Prostate gland (tissue), 2 donors: ENCODE measurements at regions of chr2 and their contacts with region 1.

Region 1: GRCh38 chr2:164717000-164717803 is 95.9 kb upstream of the GRB14 start:
- DNase-seq: no peak
- H3K4me3 ChIP-seq: no peak overlapping the region
- H3K27ac ChIP-seq: no peak overlapping the region
- H3K4me1 ChIP-seq: no peaks in the 10 kb centered on the region
- H3K27me3 ChIP-seq: no peaks in the 10 kb centered on the region
- CTCF ChIP-seq: peak in 2 of 4 experiments; percentile 37 to 40
- POLR2A ChIP-seq: no peak

Region 2: DNA sequence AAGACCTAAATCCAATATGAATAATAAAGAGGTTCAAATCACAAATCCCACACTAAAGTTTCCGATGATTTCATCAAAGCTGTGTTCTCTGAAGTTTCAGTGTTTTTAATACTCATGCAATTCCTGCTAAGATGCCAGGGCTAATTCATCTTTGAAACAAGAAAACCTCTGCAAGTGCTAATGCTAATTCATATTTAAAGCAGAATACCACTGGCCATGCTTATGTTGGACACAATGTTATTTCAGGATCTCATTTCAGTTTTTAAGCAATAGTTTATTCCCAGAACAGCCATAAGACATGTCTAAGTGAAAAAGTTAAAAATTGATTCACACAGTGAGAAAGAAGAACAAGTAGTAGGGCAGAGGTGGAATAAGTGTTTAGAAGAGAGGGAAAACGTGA is 158.8 kb before region 1 on chr2:
- intact Hi-C with region 1: loop called (anchors 5 kb)
- DNase-seq: no peak
- H3K4me3 ChIP-seq: no peak overlapping the region
- H3K27ac ChIP-seq: no peak overlapping the region
- H3K4me1 ChIP-seq: no peaks in the 10 kb centered on the region
- H3K27me3 ChIP-seq: no peaks in the 10 kb centered on the region
- CTCF ChIP-seq: no peak
- POLR2A ChIP-seq: no peak

Region 3: DNA sequence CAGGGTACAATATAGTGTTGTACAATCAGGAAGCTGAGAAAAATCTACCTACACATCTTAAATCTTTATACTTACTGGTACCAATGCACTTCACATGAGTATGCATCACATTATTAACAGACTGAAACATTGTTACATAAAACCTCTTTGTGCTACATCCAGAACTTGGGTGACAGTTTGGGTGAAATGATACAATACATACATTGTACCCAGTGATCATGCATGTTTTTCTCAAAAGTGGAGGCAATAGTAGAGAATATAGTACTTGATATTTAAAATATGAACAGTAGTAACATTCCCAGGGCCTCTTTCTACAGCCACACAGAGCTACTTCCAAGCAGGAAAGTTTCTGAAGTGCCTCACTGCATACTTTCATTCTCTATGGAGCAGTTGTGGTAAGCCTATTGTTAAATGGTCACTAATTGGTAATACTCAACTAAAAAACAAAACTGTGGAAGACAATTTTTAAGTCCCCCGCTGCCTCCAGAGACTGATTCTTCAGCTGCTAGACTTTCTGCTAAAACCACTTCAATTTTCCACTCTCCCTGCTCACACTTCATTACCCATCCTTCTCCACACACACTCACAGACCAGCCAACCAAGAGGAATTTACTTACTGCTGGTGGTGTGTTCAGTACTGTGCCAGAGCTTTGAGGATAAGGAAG is 73.0 kb before region 1 on chr2:
- intact Hi-C with region 1: no loop called
- DNase-seq: no peak
- H3K4me3 ChIP-seq: no peak overlapping the region
- H3K27ac ChIP-seq: no peak overlapping the region
- H3K4me1 ChIP-seq: no peaks in the 10 kb centered on the region
- H3K27me3 ChIP-seq: no peaks in the 10 kb centered on the region
- CTCF ChIP-seq: no peak
- POLR2A ChIP-seq: no peak